ENCODE measurements at regions of chr5 and their contacts with region 1.

Region 1: GRCh38 chr5:177249761-177250526 is 53.6 kb downstream of the RAB24 start:
- DNase-seq: no peak
- H3K4me3 ChIP-seq: no peak overlapping the region
- H3K27ac ChIP-seq: no peak overlapping the region
- H3K4me1 ChIP-seq: no peaks in the 10 kb centered on the region
- H3K27me3 ChIP-seq: no peaks in the 10 kb centered on the region
- CTCF ChIP-seq: no peak

Region 2: GRCh38 chr5:177204281-177204680 is 45.7 kb before region 1 on chr5:
- CTCF ChIA-PET with region 1: no interaction called
- POLR2A ChIA-PET with region 1: no interaction called
- intact Hi-C with region 1: loop called (anchors 5 kb)
- DNase-seq: no peak
- H3K4me3 ChIP-seq: no peak overlapping the region
- H3K27ac ChIP-seq: no peak overlapping the region
- H3K4me1 ChIP-seq: no peaks in the 10 kb centered on the region
- H3K27me3 ChIP-seq: no peaks in the 10 kb centered on the region
- CTCF ChIP-seq: no peak

Region 3: GRCh38 chr5:177300236-177300880 is 50.4 kb after region 1 on chr5:
- CTCF ChIA-PET with region 1: no interaction called
- POLR2A ChIA-PET with region 1: no interaction called
- intact Hi-C with region 1: no loop called
- DNase-seq: no peak
- H3K4me3 ChIP-seq: no peak overlapping the region
- H3K27ac ChIP-seq: peak overlapping the region; percentile 55
- H3K4me1 ChIP-seq: peaks cover 39% of the 10 kb centered on the region
- H3K27me3 ChIP-seq: no peaks in the 10 kb centered on the region
- CTCF ChIP-seq: no peak

Region 4: DNA sequence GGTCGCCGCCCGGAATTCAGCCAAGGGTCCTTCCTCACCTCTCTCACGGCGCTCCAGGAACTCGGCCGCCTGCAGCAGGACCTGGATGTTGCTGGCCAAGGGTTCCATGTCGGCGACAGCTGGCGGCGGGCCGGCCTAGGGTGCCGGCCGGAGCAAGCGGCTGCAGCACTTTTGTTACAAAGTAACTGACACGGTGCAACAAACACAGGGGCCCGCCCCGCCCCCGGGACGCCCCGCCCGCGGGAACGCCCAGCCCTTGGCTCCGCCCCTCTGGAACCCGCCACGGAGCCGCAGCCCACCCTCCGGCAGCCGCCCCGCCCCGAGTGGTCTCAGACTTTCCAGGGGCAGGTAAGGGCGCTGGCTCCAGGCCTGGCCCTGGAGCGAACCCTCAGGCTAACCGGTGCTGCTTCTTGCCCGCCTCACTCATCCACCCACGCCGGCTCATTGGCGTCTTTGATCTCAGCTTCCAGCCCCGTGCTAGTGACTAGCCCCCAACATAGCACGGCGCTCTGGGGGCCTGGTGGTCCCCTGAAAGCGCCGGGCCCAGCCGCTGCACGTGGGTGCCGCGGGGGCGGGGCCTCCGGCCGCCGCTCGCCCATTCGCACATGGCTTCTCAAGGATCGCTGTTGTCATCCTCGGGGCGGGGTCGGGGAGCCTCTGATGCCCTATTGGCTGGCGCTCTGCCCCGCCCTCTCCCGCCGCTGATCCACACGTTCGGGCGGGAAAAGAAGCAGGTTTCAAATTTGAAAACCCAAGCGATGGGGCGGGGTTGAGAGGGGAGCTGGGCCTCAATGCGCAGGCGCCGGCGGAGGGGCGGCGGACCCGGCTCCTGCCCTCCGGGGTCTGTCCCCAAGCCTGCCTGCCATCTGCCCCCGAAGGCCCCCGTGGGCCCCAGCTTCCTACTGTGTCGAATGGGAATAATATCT is 62.0 kb after region 1 on chr5 and contains the start of gene MXD3:
- CTCF ChIA-PET with region 1: no interaction called
- POLR2A ChIA-PET with region 1: no interaction called
- intact Hi-C with region 1: no loop called
- DNase-seq: peak; percentile 88 to 98
- H3K4me3 ChIP-seq: peak within 1 kb of the TSS; percentile 72
- H3K27ac ChIP-seq: peak within 1 kb of the TSS; percentile 58
- H3K4me1 ChIP-seq: peaks cover 10% of the 10 kb centered on the region; the same call in 1 of the 2 replicates
- H3K27me3 ChIP-seq: no peaks in the 10 kb centered on the region
- CTCF ChIP-seq: no peak
- total RNA-seq, gene MXD3: 50.0 and 54.8 TPM in 2 replicates